ENCODE measurements at regions of chr4 and their contacts with region 1.

Region 1: DNA sequence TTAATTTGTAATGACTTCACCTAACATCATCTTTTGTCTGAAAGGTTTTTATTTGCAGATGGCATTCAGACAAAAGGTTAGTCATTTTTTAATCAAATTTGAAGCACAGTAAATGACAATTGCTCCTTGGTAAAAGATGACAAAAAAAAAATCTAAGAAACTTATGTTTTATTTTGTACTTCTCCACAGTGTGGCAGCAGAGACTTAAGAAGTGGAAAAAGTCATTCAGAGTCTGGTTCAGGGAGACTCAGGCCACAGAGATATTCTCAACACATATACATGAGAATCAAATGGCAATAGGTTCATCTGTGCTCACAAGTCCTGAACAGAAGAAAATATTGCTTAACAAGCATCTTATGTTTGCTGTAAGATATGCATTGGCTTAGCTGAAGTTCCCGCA is 436.2 kb downstream of the KCNIP4 start:
- DNase-seq: peak in 2 of 5 donors; percentile 56 to 80
- H3K4me3 ChIP-seq: no peak overlapping the region
- H3K27ac ChIP-seq: no peak overlapping the region
- H3K4me1 ChIP-seq: no peaks in the 10 kb centered on the region
- H3K27me3 ChIP-seq: no peaks in the 10 kb centered on the region
- CTCF ChIP-seq: peak; percentile 24

Region 2: GRCh38 chr4:21765810-21766407 is 253.6 kb after region 1 on chr4:
- intact Hi-C with region 1: loop called (anchors 5 kb)
- DNase-seq: peak in 4 of 5 donors; percentile 55 to 79 (median 70)
- H3K4me3 ChIP-seq: no peak overlapping the region
- H3K27ac ChIP-seq: no peak overlapping the region
- H3K4me1 ChIP-seq: no peaks in the 10 kb centered on the region
- H3K27me3 ChIP-seq: no peaks in the 10 kb centered on the region
- CTCF ChIP-seq: peak; percentile 89